GM12878 (cell line): ENCODE measurements at regions of chrX and their contacts with region 1.

Region 1: DNA sequence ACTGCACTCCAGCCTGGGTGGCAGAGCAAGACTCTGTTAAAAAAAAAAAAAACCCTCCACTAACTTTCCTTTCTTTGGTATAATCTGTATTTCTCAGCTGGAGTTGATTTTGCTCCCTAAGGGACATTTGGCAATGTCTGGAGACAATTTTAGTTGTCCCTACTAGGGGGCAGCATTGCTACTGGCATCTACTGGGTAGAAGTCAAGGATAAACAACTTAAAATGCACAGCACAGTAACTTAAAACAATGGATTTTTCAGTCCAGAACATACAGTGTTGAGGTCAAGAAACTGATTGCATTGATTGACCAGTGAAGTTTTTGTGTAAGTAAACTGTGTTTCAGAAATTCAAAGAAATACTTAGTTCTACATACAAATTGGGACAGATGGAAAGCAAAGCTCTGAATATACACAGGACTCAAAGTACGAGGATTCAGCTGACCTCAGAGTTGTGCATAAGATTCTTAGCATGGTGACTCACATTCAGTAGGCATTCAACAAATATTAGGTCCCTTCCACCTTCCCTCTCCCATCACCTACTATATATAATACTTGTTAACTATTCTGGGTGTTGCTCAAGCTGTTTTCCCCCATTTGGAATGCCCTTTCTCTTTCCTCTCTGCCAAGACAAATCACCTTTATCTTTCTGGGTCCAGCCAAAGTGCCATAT is 8.8 kb downstream of the DDX53 start:
- DNase-seq: no peak
- ATAC-seq: peak; percentile 48; the same call in 2 of the 3 replicates
- H3K4me3 ChIP-seq: no peak overlapping the region
- H3K27ac ChIP-seq: no peak overlapping the region
- H3K4me1 ChIP-seq: no peaks in the 10 kb centered on the region
- H3K27me3 ChIP-seq: no peaks in the 10 kb centered on the region
- CTCF ChIP-seq: peak; percentile 39 to 45 (median 40); a peak in 4 of 6 replicates
- EP300 ChIP-seq: no peak
- POLR2A ChIP-seq: no peak
- RAD21 ChIP-seq: peak; percentile 36; the same call in 1 of the 2 replicates

Region 2: DNA sequence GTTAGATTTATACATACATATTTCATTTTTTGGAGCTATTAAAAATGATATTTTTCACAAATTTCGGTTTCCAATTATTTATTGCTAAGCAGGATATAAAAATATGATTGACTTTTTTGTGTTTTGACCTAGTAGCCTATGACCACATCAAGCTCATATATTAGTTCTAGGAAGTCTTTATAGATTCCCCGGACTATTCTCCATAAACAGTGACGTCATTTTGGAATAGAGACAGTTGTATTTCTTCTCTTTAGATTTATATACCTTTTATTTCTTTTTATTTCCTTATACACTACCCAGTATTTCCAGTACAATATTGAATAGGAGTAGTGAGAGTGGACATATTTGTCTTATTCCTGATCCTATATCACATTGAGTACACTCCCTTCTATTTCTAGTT is 23.0 kb after region 1 on chrX:
- CTCF ChIA-PET with region 1: no interaction called
- POLR2A ChIA-PET with region 1: no interaction called
- RAD21 ChIA-PET with region 1: no interaction called
- SMC1A ChIA-PET with region 1: no interaction called
- in situ Hi-C with region 1: no loop called
- intact Hi-C with region 1: no loop called
- DNase-seq: no peak
- ATAC-seq: no peak
- H3K4me3 ChIP-seq: no peak overlapping the region
- H3K27ac ChIP-seq: no peak overlapping the region
- H3K4me1 ChIP-seq: no peaks in the 10 kb centered on the region
- H3K27me3 ChIP-seq: no peaks in the 10 kb centered on the region
- CTCF ChIP-seq: no peak
- EP300 ChIP-seq: no peak
- POLR2A ChIP-seq: no peak
- RAD21 ChIP-seq: no peak

Region 3: GRCh38 chrX:23136816-23137215 is 128.3 kb after region 1 on chrX:
- CTCF ChIA-PET with region 1: no interaction called
- POLR2A ChIA-PET with region 1: no interaction called
- RAD21 ChIA-PET with region 1: no interaction called
- SMC1A ChIA-PET with region 1: no interaction called
- in situ Hi-C with region 1: no loop called
- intact Hi-C with region 1: no loop called
- DNase-seq: no peak
- ATAC-seq: no peak
- H3K4me3 ChIP-seq: no peak overlapping the region
- H3K27ac ChIP-seq: no peak overlapping the region
- H3K4me1 ChIP-seq: no peaks in the 10 kb centered on the region
- H3K27me3 ChIP-seq: no peaks in the 10 kb centered on the region
- CTCF ChIP-seq: no peak
- EP300 ChIP-seq: no peak
- POLR2A ChIP-seq: no peak
- RAD21 ChIP-seq: no peak

Region 4: DNA sequence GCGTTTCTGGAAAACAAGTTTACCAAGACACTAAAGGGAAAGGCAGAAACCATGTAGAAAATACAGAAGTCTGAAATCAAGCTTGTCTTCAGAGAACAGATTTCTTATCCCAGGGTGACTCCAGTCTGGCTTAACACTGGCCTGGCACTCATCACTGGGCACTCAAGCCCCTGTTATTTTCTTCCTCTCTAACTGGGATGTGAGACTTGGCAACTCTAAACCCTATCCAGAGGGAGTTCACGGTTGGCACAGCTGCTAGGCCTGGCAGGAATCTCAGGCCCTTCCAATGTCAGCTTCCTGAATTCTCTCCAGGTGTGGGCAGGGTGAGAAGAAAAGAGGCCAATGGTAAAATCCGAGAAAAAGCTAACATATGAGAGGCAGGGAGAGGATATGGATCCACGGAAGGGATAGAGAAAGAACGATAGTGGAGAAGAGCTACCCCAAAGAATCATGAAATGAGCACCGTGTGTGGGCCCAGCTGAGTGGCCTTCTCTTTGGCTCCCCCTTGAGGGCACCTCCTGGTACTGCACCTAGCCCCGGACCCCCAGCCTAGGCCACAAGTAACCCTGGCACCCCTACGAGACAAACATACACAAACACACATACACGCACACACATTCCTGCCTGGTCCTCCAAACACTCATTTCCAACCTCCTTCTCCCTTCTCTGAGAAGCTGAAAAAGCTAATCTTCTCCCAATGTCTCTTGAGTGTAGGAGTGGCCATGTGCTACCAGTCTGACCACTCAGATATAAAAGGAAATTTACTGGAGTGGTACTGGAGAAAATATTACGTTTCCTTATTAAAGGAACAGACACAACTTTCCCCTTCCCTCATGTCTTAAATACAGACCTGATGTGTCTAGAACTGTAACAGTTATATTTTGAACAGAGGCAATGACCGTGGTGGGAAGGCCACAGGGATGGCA is 309.5 kb after region 1 on chrX:
- CTCF ChIA-PET with region 1: interaction called, 14 read pairs
- POLR2A ChIA-PET with region 1: no interaction called
- RAD21 ChIA-PET with region 1: interaction called, 6 read pairs
- SMC1A ChIA-PET with region 1: interaction called, 5 read pairs
- in situ Hi-C with region 1: no loop called
- intact Hi-C with region 1: loop called (anchors 2 kb)
- DNase-seq: no peak
- ATAC-seq: peak; percentile 99
- H3K4me3 ChIP-seq: no peak overlapping the region
- H3K27ac ChIP-seq: no peak overlapping the region
- H3K4me1 ChIP-seq: no peaks in the 10 kb centered on the region
- H3K27me3 ChIP-seq: no peaks in the 10 kb centered on the region
- CTCF ChIP-seq: peak; percentile 76 to 96 (median 88)
- EP300 ChIP-seq: no peak
- POLR2A ChIP-seq: no peak
- RAD21 ChIP-seq: peak; percentile 60

Region 5: DNA sequence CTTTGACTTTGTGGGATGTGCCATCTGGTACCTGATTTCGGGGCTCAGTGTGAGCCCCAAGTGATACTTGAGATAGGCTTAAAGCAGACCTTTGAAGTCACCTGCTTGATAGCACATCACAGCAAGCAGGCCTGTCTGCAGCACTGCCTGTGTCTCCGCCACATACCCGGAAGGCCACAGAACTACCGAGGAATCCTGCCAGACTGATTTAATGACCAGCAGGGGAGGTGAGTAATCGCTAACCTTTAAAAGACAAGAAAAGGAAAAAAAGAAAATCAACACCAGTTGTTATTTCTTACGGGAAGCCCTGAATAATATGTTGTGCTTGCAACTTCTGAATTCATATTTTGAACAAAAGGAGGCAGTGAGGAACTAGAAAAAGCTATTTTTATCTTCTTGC is 332.9 kb after region 1 on chrX:
- CTCF ChIA-PET with region 1: no interaction called
- POLR2A ChIA-PET with region 1: no interaction called
- RAD21 ChIA-PET with region 1: no interaction called
- SMC1A ChIA-PET with region 1: no interaction called
- in situ Hi-C with region 1: no loop called
- intact Hi-C with region 1: no loop called
- DNase-seq: no peak
- ATAC-seq: no peak
- H3K4me3 ChIP-seq: no peak overlapping the region
- H3K27ac ChIP-seq: no peak overlapping the region
- H3K4me1 ChIP-seq: no peaks in the 10 kb centered on the region
- H3K27me3 ChIP-seq: peaks cover 0 to 7% of the 10 kb centered on the region in 2 experiments; a peak in 1 of 4 replicates
- CTCF ChIP-seq: no peak
- EP300 ChIP-seq: no peak
- POLR2A ChIP-seq: no peak
- RAD21 ChIP-seq: no peak